AG04450 (cell line): ENCODE measurements at regions of chr14 and their contacts with region 1.

Region 1: DNA sequence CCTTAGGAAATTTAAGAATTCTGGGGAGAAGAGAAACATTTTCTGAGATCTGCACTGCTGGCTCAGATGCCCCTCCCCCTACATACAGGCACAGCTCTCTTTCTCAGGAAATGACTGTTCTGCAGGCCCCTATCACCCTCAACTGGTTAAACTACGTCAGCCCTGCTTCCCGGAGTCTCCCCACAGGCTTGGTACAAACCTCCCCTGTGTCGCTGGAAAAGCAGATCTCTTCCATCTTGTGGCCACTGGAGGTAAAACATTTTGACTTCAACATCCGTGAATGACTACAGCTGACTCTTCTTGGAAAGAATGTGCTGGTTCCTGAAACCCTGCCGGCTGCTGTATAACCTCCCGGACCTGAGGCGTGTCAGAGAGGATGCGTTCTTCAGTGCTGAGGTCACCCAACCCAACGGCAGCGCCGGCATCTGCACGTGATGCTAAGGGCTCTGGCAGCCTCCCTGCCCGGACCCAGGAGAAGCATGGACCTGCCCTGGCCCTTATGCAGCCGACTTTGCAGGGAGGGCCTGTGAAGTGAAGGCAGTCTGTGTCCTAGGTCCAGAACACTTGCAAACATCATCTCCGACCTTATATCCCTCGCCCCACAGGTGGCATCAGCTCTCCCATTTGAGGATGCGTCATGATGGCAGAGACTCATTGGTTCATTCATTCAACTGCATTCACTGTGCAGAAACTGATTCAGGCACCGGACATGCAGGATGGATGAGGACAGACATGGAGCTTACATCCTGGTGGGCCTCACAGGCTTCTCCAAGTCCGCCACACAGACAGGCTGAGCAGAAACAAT is 129.3 kb downstream of the GCH1 start:
- DNase-seq: peak; percentile 99
- H3K4me3 ChIP-seq: peak overlapping the region; percentile 37
- H3K27ac ChIP-seq: peak overlapping the region; percentile 100
- H3K27me3 ChIP-seq: no peaks in the 10 kb centered on the region
- CTCF ChIP-seq: peak; percentile 75

Region 2: DNA sequence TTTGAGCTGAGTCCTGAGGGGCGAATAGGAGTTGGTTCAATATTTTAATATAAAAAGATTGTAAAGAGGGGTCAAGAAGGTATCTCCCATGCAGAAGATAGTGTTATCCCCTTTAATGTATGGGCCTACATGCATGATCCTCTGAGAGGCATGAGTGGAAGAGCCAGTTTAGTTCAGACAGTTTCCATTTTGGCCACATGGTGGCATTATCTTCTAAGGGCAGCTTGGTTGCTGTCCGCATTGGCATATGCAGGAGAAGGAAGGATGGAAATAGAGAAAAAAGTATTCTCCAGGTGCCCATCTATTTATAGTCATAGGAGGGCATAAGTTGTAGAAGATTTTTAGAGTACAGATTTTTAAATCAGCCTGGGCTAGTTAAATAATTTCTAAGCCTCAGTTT is 201.1 kb before region 1 on chr14:
- CTCF ChIA-PET with region 1: interaction called, 186 read pairs
- POLR2A ChIA-PET with region 1: interaction called, 61 read pairs
- DNase-seq: no peak
- H3K4me3 ChIP-seq: no peak overlapping the region
- H3K27ac ChIP-seq: no peak overlapping the region
- H3K27me3 ChIP-seq: no peaks in the 10 kb centered on the region
- CTCF ChIP-seq: peak; percentile 46

Region 3: GRCh38 chr14:54582334-54582733 is 191.0 kb before region 1 on chr14:
- CTCF ChIA-PET with region 1: interaction called, 10 read pairs
- POLR2A ChIA-PET with region 1: no interaction called
- DNase-seq: no peak
- H3K4me3 ChIP-seq: no peak overlapping the region
- H3K27ac ChIP-seq: no peak overlapping the region
- H3K27me3 ChIP-seq: no peaks in the 10 kb centered on the region
- CTCF ChIP-seq: no peak

Region 4: DNA sequence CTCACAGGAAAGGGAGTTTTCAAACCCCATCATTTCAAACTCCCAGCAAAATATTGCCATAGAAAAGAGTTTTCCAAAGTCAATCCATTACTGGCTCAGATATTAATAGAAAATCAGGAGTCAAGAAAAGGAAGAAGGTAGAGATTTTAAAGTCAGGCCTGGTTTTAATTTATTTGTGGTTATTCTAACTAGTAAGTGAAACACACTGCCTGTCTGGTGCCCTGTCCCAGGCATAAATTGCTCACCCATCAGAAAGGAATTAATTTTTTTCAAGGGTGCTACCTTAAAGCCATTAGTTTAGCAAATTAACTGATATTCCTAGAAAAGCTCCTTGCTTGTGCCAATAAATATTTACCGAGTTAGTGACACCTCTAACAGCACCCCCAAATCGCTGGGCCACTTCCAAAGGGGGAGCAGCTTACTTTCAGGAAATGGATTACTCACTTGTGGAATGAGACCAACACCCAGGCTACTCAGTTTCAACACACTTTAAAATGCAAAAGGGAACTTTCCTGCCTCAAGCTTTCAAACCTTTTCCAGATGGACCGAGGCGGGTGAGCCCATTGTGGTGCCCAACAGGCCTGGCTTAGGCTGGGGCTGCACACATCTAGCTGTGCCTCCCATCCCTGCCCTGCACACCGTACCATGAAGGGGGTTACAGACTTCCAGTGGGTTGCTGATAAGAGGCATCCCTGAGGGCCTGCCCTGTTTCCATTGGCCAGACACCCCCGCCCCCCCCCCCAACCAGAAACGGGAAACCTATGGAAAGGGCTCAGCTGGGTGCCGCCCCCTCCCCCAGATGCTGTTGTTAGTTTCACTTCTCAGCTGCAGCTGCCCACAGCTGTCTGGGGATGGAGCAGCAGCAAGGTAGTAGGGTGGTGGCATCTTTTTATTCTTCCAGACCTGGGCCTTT is 89.2 kb before region 1 on chr14:
- CTCF ChIA-PET with region 1: interaction called, 12 read pairs
- POLR2A ChIA-PET with region 1: interaction called, 3 read pairs
- DNase-seq: peak; percentile 33
- H3K4me3 ChIP-seq: peak overlapping the region; percentile 34
- H3K27ac ChIP-seq: peak overlapping the region; percentile 88
- H3K27me3 ChIP-seq: no peaks in the 10 kb centered on the region
- CTCF ChIP-seq: no peak

Region 5: DNA sequence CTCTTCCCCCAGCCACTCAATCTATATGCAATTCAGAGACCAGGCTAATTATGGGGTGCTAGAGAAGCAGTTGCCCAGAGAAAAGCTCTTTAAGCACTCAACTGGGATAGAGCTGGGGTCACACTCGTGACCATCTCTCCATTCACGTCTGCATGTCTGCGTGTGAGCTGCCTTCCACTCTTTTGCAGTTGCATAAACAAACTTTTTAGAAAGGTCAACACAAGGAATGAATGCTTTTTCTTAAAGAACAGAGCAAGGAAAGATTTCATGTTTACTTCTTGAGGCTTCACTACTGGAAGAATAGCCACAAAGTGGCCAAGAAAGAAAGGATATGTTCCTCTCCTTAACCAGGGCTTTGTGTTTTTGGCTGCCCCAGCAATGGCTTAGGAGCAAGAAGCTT is 55.3 kb before region 1 on chr14:
- CTCF ChIA-PET with region 1: interaction called, 8 read pairs
- POLR2A ChIA-PET with region 1: interaction called, 13 read pairs
- DNase-seq: no peak
- H3K4me3 ChIP-seq: no peak overlapping the region
- H3K27ac ChIP-seq: peak overlapping the region; percentile 84
- H3K27me3 ChIP-seq: no peaks in the 10 kb centered on the region
- CTCF ChIP-seq: no peak

Region 6: DNA sequence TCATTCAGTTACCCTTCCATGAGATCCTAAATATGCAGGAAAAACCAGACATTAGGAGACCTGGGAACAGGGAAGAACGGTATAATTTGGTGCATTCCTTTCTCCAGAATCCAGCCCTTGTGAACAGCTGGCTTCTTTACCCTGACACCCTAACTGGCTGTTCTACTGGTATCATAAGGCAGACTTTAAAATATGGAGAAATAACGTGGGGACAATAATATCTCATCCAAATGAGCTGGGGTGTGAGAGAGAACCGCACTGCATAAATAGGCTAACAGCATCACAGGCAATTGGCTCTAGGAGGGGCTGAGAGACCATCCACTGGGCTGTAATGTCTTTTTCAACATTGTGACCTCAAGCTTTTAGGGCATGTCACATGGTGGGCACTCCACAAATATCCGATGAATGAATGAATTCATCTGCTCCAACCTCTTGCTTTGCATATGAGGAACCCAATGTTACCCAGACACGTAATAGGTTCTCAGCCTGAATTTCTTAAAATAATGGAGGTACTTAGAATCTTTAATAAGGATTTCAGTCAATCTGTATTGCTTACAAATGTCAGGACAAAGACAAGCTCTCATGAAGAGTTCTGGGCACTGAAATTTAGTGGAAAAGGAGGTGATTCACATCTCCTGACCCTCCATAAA is 48.6 kb before region 1 on chr14:
- CTCF ChIA-PET with region 1: interaction called, 12 read pairs
- POLR2A ChIA-PET with region 1: no interaction called
- DNase-seq: no peak
- H3K4me3 ChIP-seq: no peak overlapping the region
- H3K27ac ChIP-seq: no peak overlapping the region
- H3K27me3 ChIP-seq: no peaks in the 10 kb centered on the region
- CTCF ChIP-seq: no peak

Region 7: DNA sequence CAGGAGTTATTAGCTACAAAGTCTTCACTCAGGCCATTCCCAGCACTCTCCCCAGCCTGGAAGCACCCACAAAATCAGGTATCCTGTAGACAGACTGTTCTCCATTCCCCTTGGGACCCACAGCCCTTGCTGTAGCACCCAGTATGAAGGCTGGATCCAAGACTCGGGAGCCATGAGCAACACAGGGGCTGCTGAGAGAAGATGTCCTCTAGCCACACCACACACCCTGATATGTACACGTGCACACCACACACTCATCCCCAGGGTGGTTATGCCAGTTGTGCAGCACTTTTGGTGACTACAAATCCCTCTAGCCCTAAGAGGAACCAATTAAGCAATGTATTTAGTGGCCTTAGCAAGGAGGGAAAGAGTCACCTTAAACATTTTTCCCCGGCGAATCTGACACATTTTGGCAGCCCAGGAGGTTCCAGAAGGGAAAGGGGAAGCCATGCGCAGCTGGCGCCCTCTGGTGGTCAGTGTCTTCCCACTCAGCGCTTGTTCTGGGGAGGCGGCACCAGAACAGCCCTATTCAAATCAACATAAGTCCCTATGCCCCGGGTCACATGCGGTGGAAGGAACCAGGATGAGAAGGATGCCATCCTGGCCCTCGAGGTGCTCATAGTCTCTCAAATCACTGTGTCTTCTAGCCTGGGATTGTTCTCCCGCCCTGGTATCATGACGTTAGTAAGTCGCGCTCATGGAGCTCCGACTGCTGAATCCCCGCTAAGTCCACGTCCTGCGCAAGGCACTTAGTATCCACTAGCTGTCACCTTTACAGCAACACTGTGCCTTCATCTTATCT is 32.3 kb after region 1 on chr14:
- CTCF ChIA-PET with region 1: interaction called, 10 read pairs
- POLR2A ChIA-PET with region 1: interaction called, 5 read pairs
- DNase-seq: peak; percentile 65
- H3K4me3 ChIP-seq: peak overlapping the region; percentile 18
- H3K27ac ChIP-seq: no peak overlapping the region
- H3K27me3 ChIP-seq: peaks cover 5% of the 10 kb centered on the region
- CTCF ChIP-seq: peak; percentile 99